ENCODE measurements at regions of chr5 and their contacts with region 1.

Region 1: GRCh38 chr5:152142840-152143469 is 218.3 kb upstream of the GLRA1 start:
- DNase-seq: peak; percentile 75
- H3K4me3 Mint-ChIP-seq: no peak overlapping the region
- H3K27ac Mint-ChIP-seq: no peak overlapping the region
- H3K4me1 Mint-ChIP-seq: no peaks in the 10 kb centered on the region
- H3K27me3 Mint-ChIP-seq: peaks cover 26% of the 10 kb centered on the region
- CTCF ChIP-seq: peak; percentile 99

Region 2: DNA sequence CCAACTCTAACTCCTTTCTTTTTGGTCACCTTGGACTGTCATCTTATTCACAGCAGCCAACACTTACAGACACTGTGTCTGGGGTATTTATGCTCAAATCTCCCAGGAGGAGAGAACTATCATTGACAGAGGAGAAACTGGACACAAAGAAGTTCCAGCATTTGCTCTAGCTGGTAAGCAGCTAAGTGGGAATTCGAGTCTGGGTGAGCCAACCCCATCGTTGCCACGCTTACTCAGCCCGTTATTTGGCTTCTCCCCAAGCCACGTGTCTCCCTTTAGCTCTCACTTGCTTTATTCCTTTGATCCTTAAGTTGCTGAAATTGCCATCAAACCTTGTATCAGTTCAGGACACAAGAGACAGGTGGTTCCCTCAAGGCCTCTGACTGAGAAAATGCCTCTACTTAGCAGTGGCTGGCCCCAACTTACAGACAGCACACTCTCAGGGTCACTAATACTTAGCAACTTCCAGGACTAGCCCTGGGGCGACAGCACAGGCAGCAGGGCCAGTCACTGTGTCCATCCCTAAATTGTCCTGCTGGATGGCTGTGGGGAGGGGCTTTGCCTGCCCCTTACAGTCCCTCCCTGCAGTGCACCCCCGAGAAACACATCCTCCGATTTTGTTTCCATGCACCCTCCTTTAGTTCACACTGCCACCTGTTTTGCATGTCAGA is 797.0 kb before region 1 on chr5:
- CTCF ChIA-PET with region 1: no interaction called
- POLR2A ChIA-PET with region 1: no interaction called
- intact Hi-C with region 1: no loop called
- DNase-seq: peak; percentile 68
- H3K4me3 Mint-ChIP-seq: no peak overlapping the region
- H3K27ac Mint-ChIP-seq: no peak overlapping the region
- H3K4me1 Mint-ChIP-seq: peaks cover 9% of the 10 kb centered on the region
- H3K27me3 Mint-ChIP-seq: peaks cover 30% of the 10 kb centered on the region
- CTCF ChIP-seq: no peak

Region 3: GRCh38 chr5:151659001-151659754 is 483.8 kb before region 1 on chr5:
- CTCF ChIA-PET with region 1: interaction called, 11 read pairs
- POLR2A ChIA-PET with region 1: no interaction called
- intact Hi-C with region 1: loop called (anchors 1 kb)
- DNase-seq: peak; percentile 87
- H3K4me3 Mint-ChIP-seq: no peak overlapping the region
- H3K27ac Mint-ChIP-seq: no peak overlapping the region
- H3K4me1 Mint-ChIP-seq: peaks cover 22% of the 10 kb centered on the region
- H3K27me3 Mint-ChIP-seq: no peaks in the 10 kb centered on the region
- CTCF ChIP-seq: peak; percentile 98

Region 4: GRCh38 chr5:151811593-151812321 is 331.2 kb before region 1 on chr5:
- CTCF ChIA-PET with region 1: interaction called, 112 read pairs
- POLR2A ChIA-PET with region 1: no interaction called
- intact Hi-C with region 1: no loop called
- DNase-seq: peak; percentile 57
- H3K4me3 Mint-ChIP-seq: no peak overlapping the region
- H3K27ac Mint-ChIP-seq: peak overlapping the region; percentile 58
- H3K4me1 Mint-ChIP-seq: peaks cover 44% of the 10 kb centered on the region
- H3K27me3 Mint-ChIP-seq: no peaks in the 10 kb centered on the region
- CTCF ChIP-seq: no peak

Region 5: GRCh38 chr5:151881621-151882225 is 261.2 kb before region 1 on chr5:
- CTCF ChIA-PET with region 1: interaction called, 11 read pairs
- POLR2A ChIA-PET with region 1: no interaction called
- intact Hi-C with region 1: no loop called
- DNase-seq: no peak
- H3K4me3 Mint-ChIP-seq: no peak overlapping the region
- H3K27ac Mint-ChIP-seq: no peak overlapping the region
- H3K4me1 Mint-ChIP-seq: peaks cover 6% of the 10 kb centered on the region
- H3K27me3 Mint-ChIP-seq: no peaks in the 10 kb centered on the region
- CTCF ChIP-seq: no peak

Region 6: GRCh38 chr5:151949909-151950308 is 193.0 kb before region 1 on chr5:
- CTCF ChIA-PET with region 1: interaction called, 13 read pairs
- POLR2A ChIA-PET with region 1: interaction called, 3 read pairs
- intact Hi-C with region 1: no loop called
- DNase-seq: no peak
- H3K4me3 Mint-ChIP-seq: no peak overlapping the region
- H3K27ac Mint-ChIP-seq: no peak overlapping the region
- H3K4me1 Mint-ChIP-seq: no peaks in the 10 kb centered on the region
- H3K27me3 Mint-ChIP-seq: no peaks in the 10 kb centered on the region
- CTCF ChIP-seq: no peak

Region 7: GRCh38 chr5:152164860-152165259 is 21.9 kb after region 1 on chr5:
- CTCF ChIA-PET with region 1: interaction called, 40 read pairs
- POLR2A ChIA-PET with region 1: no interaction called
- intact Hi-C with region 1: no loop called
- DNase-seq: no peak
- H3K4me3 Mint-ChIP-seq: no peak overlapping the region
- H3K27ac Mint-ChIP-seq: no peak overlapping the region
- H3K4me1 Mint-ChIP-seq: no peaks in the 10 kb centered on the region
- H3K27me3 Mint-ChIP-seq: peaks cover 10% of the 10 kb centered on the region
- CTCF ChIP-seq: no peak

Region 8: DNA sequence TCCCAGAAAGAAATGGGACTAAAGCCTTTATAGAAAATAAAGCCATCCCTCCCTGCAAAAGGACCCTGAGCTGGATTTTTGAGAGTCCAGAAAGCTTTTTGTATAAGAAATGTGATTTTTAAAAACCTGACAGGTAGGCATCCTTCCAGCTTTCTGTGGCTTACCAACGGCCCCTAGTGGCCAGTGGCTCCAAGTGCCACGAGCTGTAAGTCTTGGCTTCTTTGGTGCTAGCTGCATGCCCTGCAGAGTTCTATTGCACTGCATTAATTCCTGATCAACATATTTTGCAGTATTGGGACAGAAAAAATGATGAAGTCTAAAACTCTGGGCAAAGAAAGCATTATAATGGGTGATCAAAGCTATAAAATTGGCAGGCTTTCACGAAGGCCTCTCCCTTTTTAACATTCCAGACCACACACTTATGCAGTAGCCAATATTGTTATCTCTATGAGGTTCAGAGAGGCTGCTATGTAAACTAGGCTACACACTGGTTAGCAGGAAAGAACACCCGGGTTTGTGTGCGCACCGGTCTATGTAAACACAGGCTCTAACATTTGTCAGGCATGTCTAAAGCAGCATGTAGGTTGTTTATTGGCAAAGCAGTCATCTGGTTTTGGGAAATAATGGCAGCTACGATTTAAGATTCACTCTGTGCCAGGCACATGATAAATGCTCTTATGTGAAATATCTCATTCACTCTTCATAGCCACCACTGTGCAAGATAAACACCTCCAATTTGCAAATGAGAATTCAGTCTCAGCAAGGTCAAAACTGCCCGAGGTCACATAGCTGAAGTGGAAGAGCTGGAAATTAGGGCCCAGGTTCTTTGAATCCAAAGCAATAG is 206.9 kb after region 1 on chr5:
- CTCF ChIA-PET with region 1: interaction called, 63 read pairs
- POLR2A ChIA-PET with region 1: no interaction called
- intact Hi-C with region 1: loop called (anchors 2 kb)
- DNase-seq: peak; percentile 70
- H3K4me3 Mint-ChIP-seq: no peak overlapping the region
- H3K27ac Mint-ChIP-seq: no peak overlapping the region
- H3K4me1 Mint-ChIP-seq: no peaks in the 10 kb centered on the region
- H3K27me3 Mint-ChIP-seq: no peaks in the 10 kb centered on the region
- CTCF ChIP-seq: peak; percentile 97

Measured in MCF 10A (cell line).